ENCODE measurements at regions of chr3 and their contacts with region 1.

Region 1: GRCh38 chr3:128725932-128726690 is at the start of gene RAB7A:
- DNase-seq: peak; percentile 92 to 97 (median 97)
- ATAC-seq: peak; percentile 98
- H3K4me3 ChIP-seq: peak within 1 kb of the TSS; percentile 57
- H3K4me3 Mint-ChIP-seq: peak within 1 kb of the TSS; percentile 89 to 98 (median 96)
- H3K27ac ChIP-seq: peak within 1 kb of the TSS; percentile 100
- H3K27ac Mint-ChIP-seq: peak within 1 kb of the TSS; percentile 92 to 98 (median 95)
- H3K4me1 ChIP-seq: peaks cover 32 to 38% of the 10 kb centered on the region in 2 donors
- H3K4me1 Mint-ChIP-seq: peaks cover 49 to 64% (median 60%) of the 10 kb centered on the region in 7 donors
- H3K27me3 ChIP-seq: no peaks in the 10 kb centered on the region
- H3K27me3 Mint-ChIP-seq: peaks cover 0 to 3% (median 0%) of the 10 kb centered on the region in 5 donors
- total RNA-seq, gene RAB7A: 124 to 249 (median 172) TPM

Region 2: GRCh38 chr3:128698211-128699064 is 27.7 kb before region 1 on chr3:
- CTCF ChIA-PET with region 1: interaction called, 3 read pairs
- POLR2A ChIA-PET with region 1: interaction called, 4 read pairs
- intact Hi-C with region 1: loop called in 1 of 2 experiments (anchors 1 kb)
- DNase-seq: peak in 7 of 9 donors; percentile 5 to 36 (median 26)
- ATAC-seq: peak; percentile 72
- H3K4me3 ChIP-seq: peak overlapping the region; percentile 60
- H3K4me3 Mint-ChIP-seq: peak overlapping the region; percentile 70 to 88 (median 84)
- H3K27ac ChIP-seq: peak overlapping the region; percentile 48
- H3K27ac Mint-ChIP-seq: peak overlapping the region in 6 of 9 donors; percentile 48 to 78 (median 72)
- H3K4me1 ChIP-seq: no peaks in the 10 kb centered on the region
- H3K4me1 Mint-ChIP-seq: peaks cover 0 to 6% (median 0%) of the 10 kb centered on the region in 7 donors
- H3K27me3 ChIP-seq: no peaks in the 10 kb centered on the region
- H3K27me3 Mint-ChIP-seq: peaks cover 0 to 2% (median 0%) of the 10 kb centered on the region in 5 donors

Region 3: GRCh38 chr3:128787256-128788240 is 61.4 kb after region 1 on chr3:
- CTCF ChIA-PET with region 1: interaction called, 5 read pairs
- POLR2A ChIA-PET with region 1: interaction called, 16 read pairs
- intact Hi-C with region 1: loop called in 1 of 2 experiments (anchors 1 kb)
- DNase-seq: peak in 5 of 9 donors; percentile 23 to 37 (median 30)
- ATAC-seq: peak; percentile 63
- H3K4me3 ChIP-seq: peak overlapping the region; percentile 8
- H3K4me3 Mint-ChIP-seq: peak overlapping the region; percentile 48 to 88 (median 84)
- H3K27ac ChIP-seq: peak overlapping the region; percentile 66
- H3K27ac Mint-ChIP-seq: peak overlapping the region; percentile 83 to 97 (median 96)
- H3K4me1 ChIP-seq: peaks cover 35 to 74% of the 10 kb centered on the region in 2 donors
- H3K4me1 Mint-ChIP-seq: peaks cover 67 to 98% (median 85%) of the 10 kb centered on the region in 7 donors
- H3K27me3 ChIP-seq: no peaks in the 10 kb centered on the region
- H3K27me3 Mint-ChIP-seq: no peaks in the 10 kb centered on the region

Region 4: GRCh38 chr3:128804017-128804810 is 78.1 kb after region 1 on chr3:
- CTCF ChIA-PET with region 1: no interaction called
- POLR2A ChIA-PET with region 1: interaction called, 5 read pairs
- intact Hi-C with region 1: loop called (anchors 1 kb)
- DNase-seq: peak in 8 of 9 donors; percentile 54 to 88 (median 84)
- ATAC-seq: peak; percentile 92
- H3K4me3 ChIP-seq: peak overlapping the region; percentile 49
- H3K4me3 Mint-ChIP-seq: peak overlapping the region; percentile 48 to 89 (median 80)
- H3K27ac ChIP-seq: peak overlapping the region; percentile 74
- H3K27ac Mint-ChIP-seq: peak overlapping the region; percentile 91 to 98 (median 96)
- H3K4me1 ChIP-seq: peaks cover 22 to 64% of the 10 kb centered on the region in 2 donors
- H3K4me1 Mint-ChIP-seq: peaks cover 59 to 91% (median 85%) of the 10 kb centered on the region in 7 donors
- H3K27me3 ChIP-seq: no peaks in the 10 kb centered on the region
- H3K27me3 Mint-ChIP-seq: no peaks in the 10 kb centered on the region

Region 5: GRCh38 chr3:129160891-129161859 is 435.1 kb after region 1 on chr3 and contains the start of gene ISY1:
- CTCF ChIA-PET with region 1: no interaction called
- POLR2A ChIA-PET with region 1: no interaction called
- intact Hi-C with region 1: loop called in 1 of 2 experiments (anchors 1 kb)
- DNase-seq: peak; percentile 68 to 92 (median 89)
- ATAC-seq: peak; percentile 90
- H3K4me3 ChIP-seq: peak within 1 kb of the TSS; percentile 94
- H3K4me3 Mint-ChIP-seq: peak within 1 kb of the TSS; percentile 84 to 100 (median 98)
- H3K27ac ChIP-seq: peak within 1 kb of the TSS; percentile 98
- H3K27ac Mint-ChIP-seq: peak within 1 kb of the TSS; percentile 97 to 100 (median 99)
- H3K4me1 ChIP-seq: peaks cover 22 to 24% of the 10 kb centered on the region in 2 donors
- H3K4me1 Mint-ChIP-seq: peaks cover 18 to 53% (median 40%) of the 10 kb centered on the region in 7 donors
- H3K27me3 ChIP-seq: no peaks in the 10 kb centered on the region
- H3K27me3 Mint-ChIP-seq: peaks cover 0 to 4% (median 0%) of the 10 kb centered on the region in 5 donors
- total RNA-seq, gene ISY1: 27.6 to 65.1 (median 37.4) TPM

Measured in naive thymus-derived CD4-positive, alpha-beta T cell (primary cell).